ENCODE measurements at regions of chr16 and their contacts with region 1.

Region 1: DNA sequence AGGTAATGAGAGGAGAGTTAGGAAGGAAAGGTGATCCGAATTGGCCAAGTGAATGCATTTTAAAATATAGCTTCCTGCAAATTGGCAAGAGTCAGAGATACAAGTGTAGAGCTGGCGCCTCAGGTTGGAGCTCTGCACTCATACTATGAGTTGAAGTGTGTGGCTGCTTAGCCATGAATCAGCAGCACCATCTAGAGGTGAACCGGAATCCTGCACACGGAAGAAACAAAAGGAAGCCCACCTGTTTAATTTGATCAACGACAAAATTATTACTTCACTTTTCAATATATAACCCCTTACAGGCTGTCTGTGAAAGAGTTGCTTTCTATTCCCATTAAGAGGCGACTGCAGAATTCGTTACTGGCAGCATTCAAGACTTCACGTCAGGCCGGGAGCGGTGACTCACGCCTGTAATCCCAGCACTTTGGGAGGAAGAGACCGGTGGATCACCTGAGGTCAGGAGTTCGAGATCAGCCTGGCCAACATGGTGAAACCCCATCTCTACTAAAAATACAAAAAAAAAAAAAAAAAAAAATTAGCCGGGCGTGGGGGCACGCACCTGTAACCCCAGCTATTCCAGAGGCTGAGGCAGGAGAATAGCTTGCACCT is 1253.7 kb upstream of the CDH8 start:
- DNase-seq: peak; percentile 72
- H3K4me3 ChIP-seq: no peak overlapping the region
- H3K27ac ChIP-seq: no peak overlapping the region
- H3K4me1 ChIP-seq: no peaks in the 10 kb centered on the region
- H3K27me3 ChIP-seq: no peaks in the 10 kb centered on the region
- CTCF ChIP-seq: peak; percentile 91

Region 2: GRCh38 chr16:62190426-62190825 is 1099.5 kb before region 1 on chr16:
- CTCF ChIA-PET with region 1: interaction called, 4 read pairs
- POLR2A ChIA-PET with region 1: no interaction called
- intact Hi-C with region 1: loop called (anchors 10 kb)
- DNase-seq: peak; percentile 66
- H3K4me3 ChIP-seq: no peak overlapping the region
- H3K27ac ChIP-seq: no peak overlapping the region
- H3K4me1 ChIP-seq: no peaks in the 10 kb centered on the region
- H3K27me3 ChIP-seq: no peaks in the 10 kb centered on the region
- CTCF ChIP-seq: peak; percentile 86

Region 3: DNA sequence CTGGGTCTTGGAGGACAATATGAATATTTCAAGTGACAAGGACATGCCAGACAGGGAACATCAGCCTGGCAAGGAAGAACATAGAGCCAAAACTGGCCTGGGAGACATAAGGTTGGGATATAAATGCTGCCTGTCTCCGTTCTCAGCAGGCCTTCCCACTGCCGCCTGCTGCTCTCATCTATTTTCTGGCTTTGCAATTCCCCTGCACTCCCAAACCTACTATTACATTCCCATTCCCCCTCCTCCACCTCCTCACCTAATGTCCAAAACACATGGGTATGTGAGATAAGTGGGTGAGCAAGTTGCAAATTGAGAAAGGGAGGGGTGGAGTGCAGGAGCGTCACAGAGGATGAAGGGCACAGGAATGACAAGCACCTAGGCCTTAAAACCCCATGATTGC is 1009.5 kb before region 1 on chr16:
- CTCF ChIA-PET with region 1: interaction called, 10 read pairs
- POLR2A ChIA-PET with region 1: no interaction called
- intact Hi-C with region 1: no loop called
- DNase-seq: no peak
- H3K4me3 ChIP-seq: no peak overlapping the region
- H3K27ac ChIP-seq: no peak overlapping the region
- H3K4me1 ChIP-seq: no peaks in the 10 kb centered on the region
- H3K27me3 ChIP-seq: peaks cover 16% of the 10 kb centered on the region
- CTCF ChIP-seq: no peak

Region 4: GRCh38 chr16:63331111-63331510 is 41.2 kb after region 1 on chr16:
- CTCF ChIA-PET with region 1: no interaction called
- POLR2A ChIA-PET with region 1: no interaction called
- intact Hi-C with region 1: no loop called
- DNase-seq: no peak
- H3K4me3 ChIP-seq: no peak overlapping the region
- H3K27ac ChIP-seq: no peak overlapping the region
- H3K4me1 ChIP-seq: no peaks in the 10 kb centered on the region
- H3K27me3 ChIP-seq: no peaks in the 10 kb centered on the region
- CTCF ChIP-seq: no peak

Measured in A673 (cell line).